ENCODE measurements at regions of chr6 and their contacts with region 1.

Region 1: DNA sequence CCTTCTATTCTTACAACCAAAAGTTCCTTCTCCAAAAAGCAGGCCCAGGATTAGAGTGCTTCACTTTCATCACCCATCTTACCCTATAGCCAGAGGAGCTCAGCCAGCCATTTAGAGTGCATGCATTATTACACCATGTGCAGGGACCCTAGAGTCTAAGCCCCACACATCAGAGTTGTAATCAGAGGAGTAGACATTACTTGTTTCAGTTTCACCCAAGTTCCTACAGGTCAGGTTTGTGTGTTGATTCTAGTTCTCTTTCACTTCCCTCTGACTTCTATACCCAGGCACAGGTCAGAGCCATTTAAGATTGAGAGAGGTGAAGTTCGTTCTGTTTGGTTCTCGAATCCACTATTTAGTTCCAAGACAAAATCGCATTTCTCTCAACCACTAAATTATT is 16.3 kb upstream of the ARFGEF3 start:
- DNase-seq: peak in 1 of 2 experiments; percentile 3
- H3K4me3 ChIP-seq: no peak overlapping the region
- H3K27ac ChIP-seq: no peak overlapping the region
- H3K4me1 ChIP-seq: no peaks in the 10 kb centered on the region
- H3K27me3 ChIP-seq: no peaks in the 10 kb centered on the region
- CTCF ChIP-seq: no peak

Region 2: DNA sequence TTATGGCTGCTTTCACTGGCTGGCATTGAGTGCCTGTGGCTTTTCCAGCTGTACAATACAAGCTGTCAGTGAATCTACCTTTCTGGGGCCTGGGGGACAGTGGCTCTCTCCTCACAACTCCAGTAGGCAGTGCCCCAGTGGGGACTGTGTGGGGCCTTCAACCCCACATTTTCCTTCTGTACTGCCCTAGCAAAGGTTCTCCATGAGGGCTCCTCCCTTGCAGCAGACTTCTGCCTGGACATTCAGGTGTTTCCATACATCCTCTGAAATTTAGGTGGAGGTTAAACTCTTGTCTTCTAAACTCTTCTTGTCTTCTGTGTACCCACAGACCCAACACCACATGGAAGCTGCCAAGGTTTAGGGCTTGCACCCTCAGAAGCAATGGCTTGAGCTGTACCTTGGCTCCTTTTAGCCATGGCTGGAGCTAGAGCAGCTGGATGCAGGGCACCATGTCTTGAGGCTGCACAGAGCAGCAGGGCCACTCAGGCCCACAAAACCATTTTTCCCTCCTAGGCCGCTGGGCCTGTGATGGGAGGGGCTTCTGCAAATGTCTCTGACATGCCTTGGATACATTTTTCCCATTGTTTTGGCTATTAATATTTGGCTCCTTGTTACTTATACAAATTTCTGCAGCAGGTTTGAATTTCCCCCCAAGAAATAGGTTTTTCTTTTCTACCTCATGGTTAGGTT is 1313.4 kb before region 1 on chr6:
- CTCF ChIA-PET with region 1: no interaction called
- POLR2A ChIA-PET with region 1: interaction called, 14 read pairs
- intact Hi-C with region 1: no loop called
- DNase-seq: no peak
- H3K4me3 ChIP-seq: no peak overlapping the region
- H3K27ac ChIP-seq: no peak overlapping the region
- H3K4me1 ChIP-seq: no peaks in the 10 kb centered on the region
- H3K27me3 ChIP-seq: no peaks in the 10 kb centered on the region
- CTCF ChIP-seq: no peak

Region 3: GRCh38 chr6:137610702-137611101 is 534.7 kb before region 1 on chr6:
- CTCF ChIA-PET with region 1: no interaction called
- POLR2A ChIA-PET with region 1: no interaction called
- intact Hi-C with region 1: no loop called
- DNase-seq: no peak
- H3K4me3 ChIP-seq: no peak overlapping the region
- H3K27ac ChIP-seq: no peak overlapping the region
- H3K4me1 ChIP-seq: no peaks in the 10 kb centered on the region
- H3K27me3 ChIP-seq: no peaks in the 10 kb centered on the region
- CTCF ChIP-seq: no peak